ENCODE measurements at regions of chr7 and their contacts with region 1.

Region 1: DNA sequence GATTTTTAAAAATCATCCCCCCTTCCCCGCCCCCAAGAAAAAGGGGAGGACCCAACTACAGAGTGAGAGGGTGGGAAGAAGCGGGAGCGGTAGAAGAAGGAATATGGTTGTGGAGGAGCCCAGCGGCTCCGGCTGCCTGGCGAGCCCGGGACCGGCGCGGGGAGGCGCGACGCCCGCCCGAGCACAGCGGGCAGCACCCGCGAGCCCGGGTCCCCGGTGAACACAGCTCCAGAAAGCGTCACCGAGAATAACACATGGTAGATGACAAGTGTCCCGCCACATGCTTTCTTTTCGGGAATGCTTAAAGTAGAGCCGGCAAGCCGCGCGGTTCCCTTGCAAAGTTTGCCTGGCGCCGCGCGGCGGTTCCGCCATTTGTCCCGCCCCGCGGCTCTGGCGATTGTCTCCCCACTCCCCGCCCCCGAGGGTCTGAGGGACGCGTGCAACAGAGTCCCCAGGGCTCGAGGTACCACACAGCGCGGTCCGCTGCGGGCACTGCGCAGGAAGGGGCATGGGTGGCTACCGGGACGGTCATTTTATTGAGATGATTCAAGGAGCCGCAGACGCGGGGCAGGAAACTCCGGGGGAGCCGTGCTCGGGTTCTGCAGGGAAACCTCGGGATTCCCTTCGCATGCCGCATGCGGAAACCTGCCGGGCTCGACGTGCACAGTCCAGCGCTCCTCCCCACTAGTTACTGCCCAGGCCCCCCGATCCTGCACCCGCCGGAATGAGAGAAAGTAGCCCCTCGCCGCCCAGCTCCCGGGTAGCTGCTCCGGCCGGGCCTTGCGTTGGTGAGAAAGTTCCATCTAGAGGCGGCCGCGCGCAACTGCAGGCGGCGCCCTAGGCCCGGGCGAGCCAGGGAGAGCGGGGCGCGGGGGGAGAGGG is 781 bp upstream of the GRM8 start:
- DNase-seq: peak; percentile 40
- H3K4me3 Mint-ChIP-seq: peak overlapping the region; percentile 81
- H3K27ac Mint-ChIP-seq: no peak overlapping the region
- H3K4me1 Mint-ChIP-seq: peaks cover 17% of the 10 kb centered on the region
- H3K27me3 Mint-ChIP-seq: peaks cover 73% of the 10 kb centered on the region

Region 2: GRCh38 chr7:126803060-126803665 is 450.4 kb before region 1 on chr7:
- intact Hi-C with region 1: loop called (anchors 1 kb)
- DNase-seq: peak; percentile 9
- H3K4me3 Mint-ChIP-seq: no peak overlapping the region
- H3K27ac Mint-ChIP-seq: no peak overlapping the region
- H3K4me1 Mint-ChIP-seq: no peaks in the 10 kb centered on the region
- H3K27me3 Mint-ChIP-seq: peaks cover 2% of the 10 kb centered on the region

Region 3: DNA sequence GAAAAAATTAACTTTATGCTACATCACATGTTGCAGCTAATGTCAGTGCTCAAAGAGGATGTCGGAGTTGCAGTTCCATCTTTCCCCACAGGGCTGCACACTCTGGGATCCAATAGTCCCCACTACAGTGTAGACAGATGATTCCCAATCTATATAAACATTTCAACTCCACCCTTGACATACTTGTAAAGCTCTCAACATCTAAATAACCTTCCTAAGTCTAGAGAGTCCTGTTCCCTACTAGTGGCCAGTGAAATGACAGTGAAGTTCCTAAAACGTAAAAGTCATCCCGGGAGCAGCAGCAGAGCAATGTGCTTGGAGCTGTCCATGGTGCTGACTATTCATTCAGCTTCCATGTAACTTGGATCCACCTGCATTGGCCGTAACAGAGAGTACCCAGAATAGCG is 145.9 kb before region 1 on chr7:
- intact Hi-C with region 1: loop called (anchors 1 kb)
- DNase-seq: peak; percentile 10
- H3K4me3 Mint-ChIP-seq: no peak overlapping the region
- H3K27ac Mint-ChIP-seq: no peak overlapping the region
- H3K4me1 Mint-ChIP-seq: no peaks in the 10 kb centered on the region
- H3K27me3 Mint-ChIP-seq: no peaks in the 10 kb centered on the region

Region 4: DNA sequence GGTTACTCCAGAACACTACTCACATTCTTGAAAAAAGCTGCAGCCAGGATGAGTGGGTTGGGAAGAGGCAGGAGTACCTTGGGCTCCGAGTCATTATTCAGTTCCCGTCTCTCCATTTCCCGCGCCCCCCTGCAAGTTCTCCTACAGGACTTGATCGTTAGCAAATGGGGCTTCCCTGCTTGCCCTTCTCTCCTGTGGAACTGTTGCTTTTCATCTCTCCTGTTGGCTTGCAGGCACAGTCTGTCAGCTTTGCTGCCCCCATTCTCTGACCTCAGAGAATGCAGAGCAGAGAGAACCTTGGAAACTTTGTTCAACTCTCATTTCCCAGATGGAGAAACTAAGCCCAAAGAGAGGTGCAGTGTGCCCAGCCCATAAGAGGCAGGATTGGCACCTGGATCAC is 813.3 kb after region 1 on chr7:
- intact Hi-C with region 1: no loop called
- DNase-seq: no peak
- H3K4me3 Mint-ChIP-seq: no peak overlapping the region
- H3K27ac Mint-ChIP-seq: no peak overlapping the region
- H3K4me1 Mint-ChIP-seq: peaks cover 15% of the 10 kb centered on the region
- H3K27me3 Mint-ChIP-seq: no peaks in the 10 kb centered on the region

Measured in activated T-helper 1 cell treated with anti-CD3 and anti-CD28 coated beads, Interleukin-12 subunit alpha, Interleukin-12 subunit beta, Interleukin-2, Interleukin-4 antibody, amounts not matched to agents 30 ng/mL and 10 ng/mL and 1 ng/mL, durations not matched to agents 14 hours and 24 hours and 36 hours (primary cell).